CD8-positive, alpha-beta T cell (primary cell): ENCODE measurements at regions of chr1 and their contacts with region 1.

Region 1: DNA sequence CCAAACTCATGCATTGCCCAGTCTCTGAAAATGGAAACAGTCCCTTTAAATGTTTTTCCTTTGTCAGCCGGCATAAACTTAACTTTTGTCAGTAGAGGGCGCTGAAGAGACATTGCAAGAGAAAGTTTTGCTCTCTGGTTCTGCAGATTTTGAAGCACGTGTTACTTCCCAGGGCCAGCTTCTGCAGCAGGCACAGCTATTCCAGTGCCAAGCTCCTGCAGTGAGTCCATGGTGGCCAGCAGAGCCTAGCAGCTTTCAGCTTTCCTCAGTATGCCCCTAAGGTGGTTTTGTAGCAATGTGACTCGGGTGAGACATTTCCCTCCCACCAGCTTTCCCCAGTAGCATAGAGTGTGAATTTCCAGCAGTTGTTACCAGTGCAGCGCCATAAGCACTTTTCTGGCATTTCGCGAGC is 2.6 kb upstream of the IFI44L start:
- DNase-seq: peak; percentile 13 to 87 (median 54)
- ATAC-seq: peak; percentile 71
- H3K4me3 ChIP-seq: no peak overlapping the region
- H3K4me3 Mint-ChIP-seq: peak overlapping the region; percentile 33
- H3K27ac ChIP-seq: no peak overlapping the region
- H3K27ac Mint-ChIP-seq: peak overlapping the region; percentile 30
- H3K4me1 ChIP-seq: peaks cover 28% of the 10 kb centered on the region
- H3K4me1 Mint-ChIP-seq: peaks cover 39% of the 10 kb centered on the region
- H3K27me3 ChIP-seq: no peaks in the 10 kb centered on the region
- H3K27me3 Mint-ChIP-seq: no peaks in the 10 kb centered on the region
- CTCF ChIP-seq: peak; percentile 72

Region 2: DNA sequence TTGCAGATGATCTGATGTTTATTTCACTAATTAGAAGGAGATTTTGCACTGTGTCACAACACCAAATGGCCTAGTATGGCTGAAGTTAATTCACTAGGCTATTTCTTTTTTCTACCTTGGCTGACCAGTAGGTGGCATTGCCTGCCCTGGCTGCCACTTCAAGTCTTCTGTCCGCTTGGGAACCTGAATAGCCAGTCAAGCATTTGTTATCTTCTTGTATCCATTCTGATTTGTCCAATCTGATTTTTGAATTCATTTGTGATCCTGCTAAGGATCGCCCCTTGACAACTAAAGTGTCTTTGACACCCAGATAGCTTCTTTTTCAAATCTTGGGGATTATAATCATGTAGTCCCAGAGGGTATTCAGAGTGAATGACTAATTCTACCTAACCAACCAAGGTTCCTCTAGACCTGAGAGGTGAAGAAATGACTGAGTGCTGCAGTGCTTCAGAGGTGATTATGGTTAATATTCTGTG is 472.5 kb before region 1 on chr1:
- CTCF ChIA-PET with region 1: interaction called, 4 read pairs
- POLR2A ChIA-PET with region 1: no interaction called
- intact Hi-C with region 1: loop called in 1 of 2 experiments (anchors 5 kb)
- DNase-seq: peak in 5 of 9 experiments; percentile 7 to 56 (median 34)
- ATAC-seq: peak; percentile 40
- H3K4me3 ChIP-seq: no peak overlapping the region
- H3K4me3 Mint-ChIP-seq: no peak overlapping the region
- H3K27ac ChIP-seq: no peak overlapping the region
- H3K27ac Mint-ChIP-seq: no peak overlapping the region
- H3K4me1 ChIP-seq: peaks cover 10% of the 10 kb centered on the region
- H3K4me1 Mint-ChIP-seq: peaks cover 19% of the 10 kb centered on the region
- H3K27me3 ChIP-seq: no peaks in the 10 kb centered on the region
- H3K27me3 Mint-ChIP-seq: peaks cover 16% of the 10 kb centered on the region
- CTCF ChIP-seq: peak; percentile 63

Region 3: DNA sequence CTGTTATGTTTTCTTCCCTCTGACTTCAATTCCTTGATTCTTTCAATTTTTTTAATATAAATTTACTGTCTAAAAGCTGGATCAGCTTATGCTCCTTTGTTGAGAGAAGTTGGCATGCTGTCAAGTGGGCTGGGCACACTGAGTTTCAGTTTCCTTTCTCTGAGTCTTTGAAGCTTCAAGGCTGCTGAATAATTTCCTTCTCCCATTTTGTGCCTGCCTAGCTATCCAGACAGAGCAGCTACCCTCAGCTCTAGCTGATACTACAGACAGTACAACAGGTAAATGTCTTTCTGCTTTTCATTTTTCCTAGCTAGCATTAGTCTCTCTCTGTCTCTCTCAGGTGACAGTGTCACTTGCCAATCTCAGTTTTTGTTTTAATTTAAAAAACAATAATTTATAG is 32.0 kb after region 1 on chr1 and contains the start of gene IFI44:
- CTCF ChIA-PET with region 1: interaction called, 11 read pairs
- POLR2A ChIA-PET with region 1: interaction called, 4 read pairs
- intact Hi-C with region 1: loop called (anchors 1 to 2 kb)
- DNase-seq: peak; percentile 50 to 90 (median 74)
- ATAC-seq: peak; percentile 81
- H3K4me3 ChIP-seq: peak within 1 kb of the TSS; percentile 49 to 52
- H3K4me3 Mint-ChIP-seq: peak within 1 kb of the TSS; percentile 83
- H3K27ac ChIP-seq: peak within 1 kb of the TSS; percentile 40 to 65
- H3K27ac Mint-ChIP-seq: peak within 1 kb of the TSS; percentile 88
- H3K4me1 ChIP-seq: peaks cover 50% of the 10 kb centered on the region
- H3K4me1 Mint-ChIP-seq: peaks cover 75% of the 10 kb centered on the region
- H3K27me3 ChIP-seq: no peaks in the 10 kb centered on the region
- H3K27me3 Mint-ChIP-seq: no peaks in the 10 kb centered on the region
- CTCF ChIP-seq: no peak
- total RNA-seq, gene IFI44: 24.2 to 30.5 TPM

Region 4: GRCh38 chr1:78676347-78676982 is 58.8 kb after region 1 on chr1:
- CTCF ChIA-PET with region 1: interaction called, 94 read pairs
- POLR2A ChIA-PET with region 1: interaction called, 3 read pairs
- intact Hi-C with region 1: loop called (anchors 1 kb)
- DNase-seq: peak in 8 of 9 experiments; percentile 34 to 80 (median 59)
- ATAC-seq: peak; percentile 38
- H3K4me3 ChIP-seq: no peak overlapping the region
- H3K4me3 Mint-ChIP-seq: no peak overlapping the region
- H3K27ac ChIP-seq: no peak overlapping the region
- H3K27ac Mint-ChIP-seq: no peak overlapping the region
- H3K4me1 ChIP-seq: no peaks in the 10 kb centered on the region
- H3K4me1 Mint-ChIP-seq: peaks cover 5% of the 10 kb centered on the region
- H3K27me3 ChIP-seq: no peaks in the 10 kb centered on the region
- H3K27me3 Mint-ChIP-seq: peaks cover 3% of the 10 kb centered on the region
- CTCF ChIP-seq: peak; percentile 93